ENCODE measurements at regions of chr9 and their contacts with region 1.

Region 1: GRCh38 chr9:128034821-128035764 is 32.0 kb downstream of the NAIF1 start:
- DNase-seq: peak; percentile 76
- ATAC-seq: peak; percentile 64
- H3K4me3 Mint-ChIP-seq: no peak overlapping the region
- H3K27ac Mint-ChIP-seq: peak overlapping the region; percentile 74
- H3K4me1 Mint-ChIP-seq: peaks cover 34% of the 10 kb centered on the region
- H3K27me3 Mint-ChIP-seq: no peaks in the 10 kb centered on the region
- CTCF ChIP-seq: peak; percentile 94

Region 2: DNA sequence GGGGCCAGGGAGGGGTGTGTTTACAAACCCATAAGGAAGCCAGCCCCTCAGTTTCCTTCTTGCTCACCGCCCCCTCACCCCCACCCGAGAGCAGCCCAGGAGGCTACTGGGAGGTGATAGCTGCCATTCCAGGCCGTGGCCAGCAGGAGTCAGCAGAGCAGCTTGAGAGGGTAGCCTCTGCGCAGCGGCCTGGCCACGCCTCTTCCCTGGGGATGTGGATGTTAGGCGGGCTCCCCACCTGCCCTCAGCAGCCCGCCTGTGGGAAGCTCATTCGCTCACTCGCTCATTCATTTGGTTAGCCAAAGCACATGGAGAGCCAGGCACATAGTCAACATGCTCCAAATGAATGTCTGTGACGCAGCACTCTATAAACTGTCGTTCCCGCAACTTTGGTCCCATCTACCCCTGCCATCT is 91.4 kb before region 1 on chr9:
- CTCF ChIA-PET with region 1: interaction called, 631 read pairs
- POLR2A ChIA-PET with region 1: interaction called, 12 read pairs
- intact Hi-C with region 1: loop called (anchors 5 kb)
- DNase-seq: peak; percentile 88
- ATAC-seq: peak; percentile 93
- H3K4me3 Mint-ChIP-seq: no peak overlapping the region
- H3K27ac Mint-ChIP-seq: peak overlapping the region; percentile 86
- H3K4me1 Mint-ChIP-seq: peaks cover 29% of the 10 kb centered on the region
- H3K27me3 Mint-ChIP-seq: no peaks in the 10 kb centered on the region
- CTCF ChIP-seq: peak; percentile 95

Region 3: GRCh38 chr9:127970401-127971313 is 64.4 kb before region 1 on chr9:
- CTCF ChIA-PET with region 1: interaction called, 631 read pairs
- POLR2A ChIA-PET with region 1: interaction called, 36 read pairs
- intact Hi-C with region 1: no loop called
- DNase-seq: peak; percentile 90
- ATAC-seq: peak; percentile 73
- H3K4me3 Mint-ChIP-seq: peak overlapping the region; percentile 97
- H3K27ac Mint-ChIP-seq: peak overlapping the region; percentile 99
- H3K4me1 Mint-ChIP-seq: peaks cover 94% of the 10 kb centered on the region
- H3K27me3 Mint-ChIP-seq: no peaks in the 10 kb centered on the region
- CTCF ChIP-seq: no peak

Region 4: GRCh38 chr9:128007566-128008138 is 27.4 kb before region 1 on chr9:
- CTCF ChIA-PET with region 1: interaction called, 30 read pairs
- POLR2A ChIA-PET with region 1: interaction called, 5 read pairs
- intact Hi-C with region 1: no loop called
- DNase-seq: peak; percentile 98
- ATAC-seq: peak; percentile 88
- H3K4me3 Mint-ChIP-seq: peak overlapping the region; percentile 71
- H3K27ac Mint-ChIP-seq: peak overlapping the region; percentile 92
- H3K4me1 Mint-ChIP-seq: peaks cover 41% of the 10 kb centered on the region
- H3K27me3 Mint-ChIP-seq: no peaks in the 10 kb centered on the region
- CTCF ChIP-seq: no peak

Region 5: DNA sequence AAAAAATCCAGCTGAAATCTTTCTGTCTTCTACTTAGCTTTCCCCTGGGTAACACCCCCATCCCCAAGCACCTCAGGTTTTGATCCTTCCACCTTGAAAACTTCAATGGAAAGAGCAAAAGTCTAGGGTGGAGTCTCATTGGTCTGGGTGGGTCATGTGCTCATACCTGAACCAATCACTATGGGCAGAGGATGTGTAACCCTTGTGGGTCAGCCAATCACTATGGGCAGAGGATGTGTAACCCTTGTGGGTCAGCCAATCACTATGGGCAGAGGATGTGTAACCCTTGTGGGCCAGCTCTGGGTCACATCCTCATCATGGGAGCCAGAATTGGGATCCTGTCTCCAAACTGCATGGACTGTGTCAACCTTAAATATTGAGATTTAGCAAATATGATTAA is 13.6 kb after region 1 on chr9:
- CTCF ChIA-PET with region 1: interaction called, 31 read pairs
- POLR2A ChIA-PET with region 1: interaction called, 4 read pairs
- intact Hi-C with region 1: no loop called
- DNase-seq: no peak
- ATAC-seq: peak; percentile 93
- H3K4me3 Mint-ChIP-seq: no peak overlapping the region
- H3K27ac Mint-ChIP-seq: no peak overlapping the region
- H3K4me1 Mint-ChIP-seq: peaks cover 2% of the 10 kb centered on the region
- H3K27me3 Mint-ChIP-seq: no peaks in the 10 kb centered on the region
- CTCF ChIP-seq: no peak

Region 6: GRCh38 chr9:128094166-128094967 is 59.3 kb after region 1 on chr9:
- CTCF ChIA-PET with region 1: interaction called, 15 read pairs
- POLR2A ChIA-PET with region 1: interaction called, 5 read pairs
- intact Hi-C with region 1: no loop called
- DNase-seq: peak; percentile 92
- ATAC-seq: peak; percentile 87
- H3K4me3 Mint-ChIP-seq: peak overlapping the region; percentile 55
- H3K27ac Mint-ChIP-seq: peak overlapping the region; percentile 94
- H3K4me1 Mint-ChIP-seq: peaks cover 81% of the 10 kb centered on the region
- H3K27me3 Mint-ChIP-seq: no peaks in the 10 kb centered on the region
- CTCF ChIP-seq: no peak

Region 7: GRCh38 chr9:128117613-128118471 is 82.7 kb after region 1 on chr9:
- CTCF ChIA-PET with region 1: interaction called, 12 read pairs
- POLR2A ChIA-PET with region 1: no interaction called
- intact Hi-C with region 1: no loop called
- DNase-seq: peak; percentile 98
- ATAC-seq: peak; percentile 91
- H3K4me3 Mint-ChIP-seq: no peak overlapping the region
- H3K27ac Mint-ChIP-seq: no peak overlapping the region
- H3K4me1 Mint-ChIP-seq: peaks cover 10% of the 10 kb centered on the region
- H3K27me3 Mint-ChIP-seq: no peaks in the 10 kb centered on the region
- CTCF ChIP-seq: peak; percentile 100

Region 8: GRCh38 chr9:128136816-128137793 is 102.0 kb after region 1 on chr9:
- CTCF ChIA-PET with region 1: no interaction called
- POLR2A ChIA-PET with region 1: no interaction called
- intact Hi-C with region 1: no loop called
- DNase-seq: no peak
- ATAC-seq: no peak
- H3K4me3 Mint-ChIP-seq: no peak overlapping the region
- H3K27ac Mint-ChIP-seq: no peak overlapping the region
- H3K4me1 Mint-ChIP-seq: peaks cover 4% of the 10 kb centered on the region
- H3K27me3 Mint-ChIP-seq: peaks cover 2% of the 10 kb centered on the region
- CTCF ChIP-seq: no peak

Measured in activated CD8-positive, alpha-beta T cell treated with anti-CD3 and anti-CD28 coated beads for 36 hours (primary cell).